Mammary epithelial cell (primary cell): ENCODE measurements at regions of chr4 and their contacts with region 1.

Region 1: GRCh38 chr4:82890901-82891706 is at the start of gene SEC31A:
- DNase-seq: peak; percentile 95
- H3K4me3 ChIP-seq: peak within 1 kb of the TSS; percentile 65 to 97 (median 92)
- H3K27ac ChIP-seq: peak within 1 kb of the TSS; percentile 98
- H3K4me1 ChIP-seq: peaks cover 31% of the 10 kb centered on the region
- H3K27me3 ChIP-seq: no peaks in the 10 kb centered on the region
- CTCF ChIP-seq: peak in 1 of 2 donors; percentile 7
- total RNA-seq, gene SEC31A: 204 to 225 TPM

Region 2: DNA sequence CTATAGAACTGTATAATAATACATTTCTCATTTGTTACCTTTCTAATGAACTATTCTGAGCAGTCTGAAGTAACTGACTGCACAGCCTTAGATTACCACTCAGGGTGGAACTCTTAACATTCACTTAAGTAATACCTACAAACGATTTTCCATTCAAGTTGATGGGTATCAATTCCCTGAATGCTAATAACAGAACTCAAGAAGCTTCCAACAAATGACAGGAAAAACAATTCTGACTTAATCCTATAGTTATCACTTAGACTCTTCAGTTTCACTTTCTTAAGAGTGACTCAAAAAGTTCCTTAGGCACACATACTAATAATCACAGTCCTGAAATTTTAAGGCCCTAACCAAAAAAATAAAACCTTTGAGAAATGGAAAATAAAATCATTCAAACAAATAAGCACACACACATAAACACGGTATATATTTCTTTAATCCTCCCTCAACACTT is 538.2 kb before region 1 on chr4:
- CTCF ChIA-PET with region 1: no interaction called
- dilution Hi-C with region 1: no loop called
- in situ Hi-C with region 1: no loop called
- intact Hi-C with region 1: no loop called
- DNase-seq: no peak
- H3K4me3 ChIP-seq: no peak overlapping the region
- H3K27ac ChIP-seq: no peak overlapping the region
- H3K4me1 ChIP-seq: no peaks in the 10 kb centered on the region
- H3K27me3 ChIP-seq: no peaks in the 10 kb centered on the region
- CTCF ChIP-seq: no peak

Region 3: GRCh38 chr4:82373816-82374625 is 517.1 kb before region 1 on chr4 and contains the start of gene HNRNPD:
- CTCF ChIA-PET with region 1: no interaction called
- dilution Hi-C with region 1: no loop called
- in situ Hi-C with region 1: no loop called
- intact Hi-C with region 1: loop called (anchors 10 kb)
- DNase-seq: peak; percentile 100
- H3K4me3 ChIP-seq: peak within 1 kb of the TSS; percentile 94 to 100 (median 98)
- H3K27ac ChIP-seq: peak within 1 kb of the TSS; percentile 99
- H3K4me1 ChIP-seq: peaks cover 17% of the 10 kb centered on the region
- H3K27me3 ChIP-seq: no peaks in the 10 kb centered on the region
- CTCF ChIP-seq: peak in 1 of 2 donors; percentile 3
- total RNA-seq, gene HNRNPD: 13.5 to 251 TPM

Region 4: DNA sequence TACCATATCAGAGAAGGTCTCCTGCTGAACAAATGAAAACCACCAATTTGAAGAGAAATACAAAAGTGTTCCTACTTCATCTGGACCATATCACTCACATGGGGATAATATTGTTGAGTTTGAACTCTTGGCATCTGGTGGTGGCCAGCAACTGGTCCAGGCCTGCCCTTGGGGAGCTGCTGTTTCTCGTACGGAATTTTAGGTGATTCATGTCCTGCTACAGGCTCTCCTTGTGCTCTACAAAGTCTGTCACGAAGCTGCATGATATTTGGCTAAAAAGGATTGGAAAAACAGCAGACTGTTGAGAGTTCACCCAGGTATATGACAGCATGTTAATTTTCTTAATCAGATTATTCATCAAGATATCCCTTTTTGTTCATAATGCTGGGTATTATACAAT is 42.4 kb before region 1 on chr4:
- CTCF ChIA-PET with region 1: no interaction called
- dilution Hi-C with region 1: loop called (anchors 5 kb)
- in situ Hi-C with region 1: no loop called
- intact Hi-C with region 1: no loop called
- DNase-seq: peak; percentile 85
- H3K4me3 ChIP-seq: no peak overlapping the region
- H3K27ac ChIP-seq: peak overlapping the region; percentile 42
- H3K4me1 ChIP-seq: peaks cover 9% of the 10 kb centered on the region
- H3K27me3 ChIP-seq: no peaks in the 10 kb centered on the region
- CTCF ChIP-seq: no peak

Region 5: GRCh38 chr4:82865592-82865991 is 25.5 kb before region 1 on chr4:
- CTCF ChIA-PET with region 1: interaction called, 21 read pairs
- dilution Hi-C with region 1: no loop called
- in situ Hi-C with region 1: no loop called
- intact Hi-C with region 1: loop called (anchors 1 kb)
- DNase-seq: peak; percentile 92
- H3K4me3 ChIP-seq: no peak overlapping the region
- H3K27ac ChIP-seq: peak overlapping the region; percentile 98
- H3K4me1 ChIP-seq: peaks cover 19% of the 10 kb centered on the region
- H3K27me3 ChIP-seq: no peaks in the 10 kb centered on the region
- CTCF ChIP-seq: no peak